ENCODE measurements at regions of chr9 and their contacts with region 1.

Region 1: GRCh38 chr9:122402403-122402871 is 31.6 kb downstream of the PTGS1 start:
- DNase-seq: peak; percentile 97
- H3K4me3 ChIP-seq: no peak overlapping the region
- H3K27ac ChIP-seq: peak overlapping the region; percentile 94
- H3K4me1 ChIP-seq: peaks cover 13% of the 10 kb centered on the region
- H3K27me3 ChIP-seq: no peaks in the 10 kb centered on the region
- CTCF ChIP-seq: no peak
- POLR2A ChIP-seq: no peak

Region 2: GRCh38 chr9:122379340-122379739 is 23.1 kb before region 1 on chr9:
- CTCF ChIA-PET with region 1: no interaction called
- POLR2A ChIA-PET with region 1: no interaction called
- dilution Hi-C with region 1: no loop called
- intact Hi-C with region 1: loop called (anchors 2 kb)
- DNase-seq: no peak
- H3K4me3 ChIP-seq: no peak overlapping the region
- H3K27ac ChIP-seq: no peak overlapping the region
- H3K4me1 ChIP-seq: peaks cover 41% of the 10 kb centered on the region
- H3K27me3 ChIP-seq: no peaks in the 10 kb centered on the region
- CTCF ChIP-seq: peak; percentile 15 to 23
- POLR2A ChIP-seq: no peak

Region 3: GRCh38 chr9:122389799-122390481 is 12.5 kb before region 1 on chr9:
- CTCF ChIA-PET with region 1: interaction called, 17 read pairs
- POLR2A ChIA-PET with region 1: no interaction called
- dilution Hi-C with region 1: no loop called
- intact Hi-C with region 1: loop called (anchors 2 kb)
- DNase-seq: peak; percentile 29
- H3K4me3 ChIP-seq: no peak overlapping the region
- H3K27ac ChIP-seq: no peak overlapping the region
- H3K4me1 ChIP-seq: peaks cover 14% of the 10 kb centered on the region
- H3K27me3 ChIP-seq: no peaks in the 10 kb centered on the region
- CTCF ChIP-seq: no peak
- POLR2A ChIP-seq: no peak

Region 4: GRCh38 chr9:122445155-122445749 is 42.8 kb after region 1 on chr9:
- CTCF ChIA-PET with region 1: no interaction called
- POLR2A ChIA-PET with region 1: no interaction called
- dilution Hi-C with region 1: no loop called
- intact Hi-C with region 1: loop called (anchors 1 kb)
- DNase-seq: peak; percentile 84
- H3K4me3 ChIP-seq: no peak overlapping the region
- H3K27ac ChIP-seq: peak overlapping the region; percentile 57
- H3K4me1 ChIP-seq: peaks cover 14% of the 10 kb centered on the region
- H3K27me3 ChIP-seq: no peaks in the 10 kb centered on the region
- CTCF ChIP-seq: no peak
- POLR2A ChIP-seq: no peak

Region 5: DNA sequence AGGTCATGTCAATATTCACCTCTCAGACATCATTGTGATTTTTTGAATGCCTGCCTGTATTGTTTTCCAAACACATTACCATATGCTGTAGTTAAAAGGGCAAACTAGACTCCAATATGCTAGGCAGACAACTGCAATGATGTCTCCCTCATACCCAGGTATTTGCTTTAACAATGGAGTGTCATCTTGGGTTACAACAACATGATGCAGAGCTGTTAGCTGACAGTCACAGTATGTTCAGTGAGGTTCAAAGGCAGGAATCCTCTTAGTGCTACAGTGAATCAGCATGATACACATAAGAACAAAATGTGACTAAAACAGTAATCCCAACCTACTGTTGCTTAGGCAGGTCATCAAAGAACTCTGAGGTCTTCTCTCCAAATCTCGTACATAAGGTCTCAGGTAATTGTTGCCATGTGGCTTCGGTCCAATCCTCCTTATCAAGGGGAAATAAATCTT is 51.3 kb after region 1 on chr9:
- CTCF ChIA-PET with region 1: no interaction called
- POLR2A ChIA-PET with region 1: no interaction called
- dilution Hi-C with region 1: no loop called
- intact Hi-C with region 1: loop called (anchors 1 kb)
- DNase-seq: peak; percentile 27
- H3K4me3 ChIP-seq: no peak overlapping the region
- H3K27ac ChIP-seq: no peak overlapping the region
- H3K4me1 ChIP-seq: peaks cover 6% of the 10 kb centered on the region
- H3K27me3 ChIP-seq: peaks cover 2 to 7% of the 10 kb centered on the region in 2 experiments
- CTCF ChIP-seq: no peak
- POLR2A ChIP-seq: no peak

Region 6: GRCh38 chr9:122810306-122810946 is 408.0 kb after region 1 on chr9:
- CTCF ChIA-PET with region 1: no interaction called
- POLR2A ChIA-PET with region 1: no interaction called
- dilution Hi-C with region 1: no loop called
- intact Hi-C with region 1: loop called (anchors 1 kb)
- DNase-seq: peak; percentile 87
- H3K4me3 ChIP-seq: no peak overlapping the region
- H3K27ac ChIP-seq: no peak overlapping the region
- H3K4me1 ChIP-seq: peaks cover 10% of the 10 kb centered on the region
- H3K27me3 ChIP-seq: no peaks in the 10 kb centered on the region
- CTCF ChIP-seq: peak; percentile 45 to 79
- POLR2A ChIP-seq: no peak

Region 7: DNA sequence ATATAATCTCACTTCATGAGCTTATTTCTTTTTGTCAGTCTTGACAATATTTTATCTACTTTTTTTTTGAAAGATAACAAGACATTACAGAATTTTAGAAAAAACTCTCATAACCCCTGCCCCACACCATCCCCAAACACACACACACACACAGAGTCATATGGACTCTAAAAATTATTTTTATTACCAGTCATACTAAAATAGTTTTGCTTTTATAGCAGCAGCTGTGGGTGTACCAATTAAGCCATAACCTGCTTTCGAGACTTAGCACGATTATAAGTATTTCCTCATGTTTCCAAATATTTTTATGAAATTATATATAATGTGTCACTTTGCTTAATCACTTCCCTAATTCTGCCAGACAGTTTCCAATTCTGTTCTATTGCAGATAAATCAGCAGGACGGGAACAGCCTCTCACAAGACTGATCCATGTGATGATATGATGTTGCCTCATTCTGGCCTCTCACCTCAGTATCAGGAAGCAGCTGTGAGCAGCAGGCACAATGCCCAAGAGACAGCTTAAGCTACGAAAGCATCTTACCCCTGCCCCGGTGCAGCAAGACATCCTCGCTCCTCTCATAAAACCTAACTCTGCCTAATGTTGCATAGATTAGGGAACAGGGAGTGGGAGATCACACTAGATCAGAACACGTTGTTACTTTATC is 419.0 kb after region 1 on chr9:
- CTCF ChIA-PET with region 1: no interaction called
- POLR2A ChIA-PET with region 1: no interaction called
- dilution Hi-C with region 1: no loop called
- intact Hi-C with region 1: loop called (anchors 1 kb)
- DNase-seq: peak; percentile 98
- H3K4me3 ChIP-seq: no peak overlapping the region
- H3K27ac ChIP-seq: peak overlapping the region; percentile 97
- H3K4me1 ChIP-seq: peaks cover 66% of the 10 kb centered on the region
- H3K27me3 ChIP-seq: no peaks in the 10 kb centered on the region
- CTCF ChIP-seq: no peak
- POLR2A ChIP-seq: peak; percentile 73